ENCODE measurements at regions of chr17 and their contacts with region 1.

Region 1: GRCh38 chr17:31388770-31389661 is 2.5 kb upstream of the RAB11FIP4 start:
- DNase-seq: peak; percentile 55
- H3K4me3 Mint-ChIP-seq: no peak overlapping the region
- H3K27ac Mint-ChIP-seq: no peak overlapping the region
- H3K4me1 Mint-ChIP-seq: peaks cover 8% of the 10 kb centered on the region
- H3K27me3 Mint-ChIP-seq: peaks cover 71% of the 10 kb centered on the region

Region 2: DNA sequence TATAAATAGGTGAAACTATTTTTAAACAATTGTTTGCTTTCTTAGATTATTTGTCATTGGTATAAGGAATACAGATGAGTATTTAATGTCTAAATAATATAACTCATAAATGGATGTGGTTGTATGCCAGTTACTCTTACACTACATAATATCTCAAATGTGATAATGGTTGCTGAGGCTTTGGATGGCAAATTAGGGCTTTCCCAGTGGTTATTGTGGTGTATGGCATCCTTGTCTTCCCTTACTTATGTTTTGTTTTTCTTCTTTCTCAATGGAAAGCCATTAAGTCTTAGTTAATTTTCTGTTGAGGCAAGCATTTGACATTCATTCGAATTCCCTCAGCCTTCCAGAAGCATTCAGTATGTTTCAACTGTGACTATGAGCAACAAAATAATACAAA is 102.4 kb before region 1 on chr17:
- CTCF ChIA-PET with region 1: no interaction called
- DNase-seq: no peak
- H3K4me3 Mint-ChIP-seq: no peak overlapping the region
- H3K27ac Mint-ChIP-seq: no peak overlapping the region
- H3K4me1 Mint-ChIP-seq: peaks cover 16% of the 10 kb centered on the region
- H3K27me3 Mint-ChIP-seq: no peaks in the 10 kb centered on the region

Region 3: GRCh38 chr17:31524926-31525800 is 136.1 kb after region 1 on chr17:
- CTCF ChIA-PET with region 1: interaction called, 22 read pairs
- DNase-seq: peak; percentile 90
- H3K4me3 Mint-ChIP-seq: no peak overlapping the region
- H3K27ac Mint-ChIP-seq: no peak overlapping the region
- H3K4me1 Mint-ChIP-seq: no peaks in the 10 kb centered on the region
- H3K27me3 Mint-ChIP-seq: no peaks in the 10 kb centered on the region

Region 4: GRCh38 chr17:31535581-31535981 is 146.6 kb after region 1 on chr17:
- CTCF ChIA-PET with region 1: no interaction called
- DNase-seq: no peak
- H3K4me3 Mint-ChIP-seq: no peak overlapping the region
- H3K27ac Mint-ChIP-seq: peak overlapping the region; percentile 70
- H3K4me1 Mint-ChIP-seq: peaks cover 6% of the 10 kb centered on the region
- H3K27me3 Mint-ChIP-seq: no peaks in the 10 kb centered on the region

Measured in activated naive CD4-positive, alpha-beta T cell treated with anti-CD3 and anti-CD28 coated beads, Interleukin-2, amount 10 ng/mL, durations not matched to agents 7 days and 5 days (primary cell).